ENCODE measurements at regions of chr10 and their contacts with region 1.

Region 1: GRCh38 chr10:61877887-61878739 is 23.4 kb upstream of the ARID5B start:
- DNase-seq: no peak
- H3K4me3 ChIP-seq: no peak overlapping the region
- H3K27ac ChIP-seq: no peak overlapping the region
- H3K4me1 ChIP-seq: no peaks in the 10 kb centered on the region
- H3K27me3 ChIP-seq: no peaks in the 10 kb centered on the region
- CTCF ChIP-seq: no peak
- POLR2A ChIP-seq: no peak

Region 2: DNA sequence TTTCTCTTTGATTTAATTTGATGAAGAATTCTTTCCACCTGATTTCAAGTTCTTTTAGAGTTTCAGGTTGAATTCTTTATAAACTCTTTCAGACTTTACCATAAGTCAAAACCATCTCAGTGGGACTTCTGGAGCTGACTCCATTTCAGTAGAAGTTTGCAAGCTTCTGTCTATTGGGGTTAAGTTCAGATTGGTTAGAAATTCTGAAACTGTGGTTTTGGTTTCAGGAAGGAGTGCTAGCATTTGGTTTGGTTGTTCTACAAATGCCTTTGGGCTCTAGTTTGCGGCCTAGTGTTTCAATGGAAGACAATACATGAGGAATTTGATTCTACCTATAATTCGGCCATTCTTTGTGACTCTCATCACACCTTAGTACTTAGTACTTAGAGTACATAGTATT is 757.3 kb before region 1 on chr10:
- intact Hi-C with region 1: loop called (anchors 5 kb)
- DNase-seq: no peak
- H3K4me3 ChIP-seq: no peak overlapping the region
- H3K27ac ChIP-seq: no peak overlapping the region
- H3K4me1 ChIP-seq: no peaks in the 10 kb centered on the region
- H3K27me3 ChIP-seq: no peaks in the 10 kb centered on the region
- CTCF ChIP-seq: no peak
- POLR2A ChIP-seq: no peak

Region 3: GRCh38 chr10:61950449-61951143 is 72.5 kb after region 1 on chr10:
- intact Hi-C with region 1: loop called (anchors 2 kb)
- DNase-seq: no peak
- H3K4me3 ChIP-seq: no peak overlapping the region
- H3K27ac ChIP-seq: no peak overlapping the region
- H3K4me1 ChIP-seq: no peaks in the 10 kb centered on the region
- H3K27me3 ChIP-seq: no peaks in the 10 kb centered on the region
- CTCF ChIP-seq: no peak
- POLR2A ChIP-seq: no peak

Measured in breast epithelium (tissue), 4 donors.